Posterior vena cava (tissue), 2 donors: ENCODE measurements at regions of chr3 and their contacts with region 1.

Region 1: DNA sequence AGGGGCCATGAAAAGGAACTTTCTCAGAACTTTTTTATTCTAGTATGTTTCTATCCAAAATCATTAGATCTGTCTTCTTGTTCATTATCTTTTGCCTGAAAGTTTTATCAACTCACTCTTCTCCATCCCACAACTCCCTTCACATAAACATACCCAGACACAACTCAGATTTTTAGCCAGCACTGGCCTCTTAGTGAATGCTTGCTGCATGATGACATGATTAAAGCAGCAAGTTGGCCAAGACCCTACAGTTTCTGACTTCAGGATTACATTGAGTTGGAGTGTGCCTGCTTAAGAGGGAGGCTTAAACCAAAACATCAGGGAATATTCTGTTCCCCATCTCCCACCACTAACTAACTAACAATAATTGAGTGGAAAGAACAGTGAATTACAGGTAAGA is 38.1 kb downstream of the PLSCR2 start:
- DNase-seq: no peak

Region 2: GRCh38 chr3:146827391-146827790 is 396.2 kb after region 1 on chr3:
- intact Hi-C with region 1: loop called in 1 of 2 experiments (anchors 10 kb)
- DNase-seq: no peak